ENCODE measurements at regions of chr2 and their contacts with region 1.

Region 1: GRCh38 chr2:70616168-70616694 is 62.6 kb upstream of the TGFA start:
- DNase-seq: no peak
- ATAC-seq: no peak
- H3K4me3 ChIP-seq: no peak overlapping the region
- H3K27ac ChIP-seq: no peak overlapping the region
- H3K4me1 ChIP-seq: no peaks in the 10 kb centered on the region
- CTCF ChIP-seq: no peak
- EP300 ChIP-seq: no peak
- POLR2A ChIP-seq: no peak
- RAD21 ChIP-seq: no peak

Region 2: DNA sequence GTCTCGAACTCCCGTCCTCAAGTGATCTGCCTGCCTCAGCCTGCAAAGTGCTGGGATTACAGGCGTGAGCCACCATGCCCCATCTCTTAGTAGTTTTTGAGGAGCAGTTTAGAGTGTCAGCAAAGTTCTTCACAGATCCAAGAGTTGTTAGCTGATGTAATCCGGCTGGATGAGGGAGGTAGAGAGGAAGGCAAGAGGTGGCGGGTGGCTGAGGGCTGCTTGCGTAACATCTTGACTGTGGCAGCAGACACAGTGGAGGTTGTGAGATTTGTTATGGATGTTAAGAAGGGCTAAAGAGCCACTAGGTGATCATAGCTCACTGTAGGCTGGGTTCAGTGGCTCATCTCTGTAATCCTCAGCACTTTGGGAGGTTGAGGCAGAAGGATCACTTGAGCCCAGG is 294.9 kb before region 1 on chr2:
- CTCF ChIA-PET with region 1: interaction called, 13 read pairs
- POLR2A ChIA-PET with region 1: no interaction called
- DNase-seq: no peak
- ATAC-seq: no peak
- H3K4me3 ChIP-seq: no peak overlapping the region
- H3K27ac ChIP-seq: no peak overlapping the region
- H3K4me1 ChIP-seq: no peaks in the 10 kb centered on the region
- CTCF ChIP-seq: no peak
- EP300 ChIP-seq: no peak
- POLR2A ChIP-seq: no peak
- RAD21 ChIP-seq: no peak

Region 3: GRCh38 chr2:70347831-70348230 is 268.4 kb before region 1 on chr2:
- CTCF ChIA-PET with region 1: interaction called, 202 read pairs
- POLR2A ChIA-PET with region 1: no interaction called
- DNase-seq: no peak
- ATAC-seq: no peak
- H3K4me3 ChIP-seq: no peak overlapping the region
- H3K27ac ChIP-seq: no peak overlapping the region
- H3K4me1 ChIP-seq: peaks cover 9% of the 10 kb centered on the region; the same call in 1 of the 3 replicates
- CTCF ChIP-seq: no peak
- EP300 ChIP-seq: no peak
- POLR2A ChIP-seq: no peak
- RAD21 ChIP-seq: no peak

Region 4: DNA sequence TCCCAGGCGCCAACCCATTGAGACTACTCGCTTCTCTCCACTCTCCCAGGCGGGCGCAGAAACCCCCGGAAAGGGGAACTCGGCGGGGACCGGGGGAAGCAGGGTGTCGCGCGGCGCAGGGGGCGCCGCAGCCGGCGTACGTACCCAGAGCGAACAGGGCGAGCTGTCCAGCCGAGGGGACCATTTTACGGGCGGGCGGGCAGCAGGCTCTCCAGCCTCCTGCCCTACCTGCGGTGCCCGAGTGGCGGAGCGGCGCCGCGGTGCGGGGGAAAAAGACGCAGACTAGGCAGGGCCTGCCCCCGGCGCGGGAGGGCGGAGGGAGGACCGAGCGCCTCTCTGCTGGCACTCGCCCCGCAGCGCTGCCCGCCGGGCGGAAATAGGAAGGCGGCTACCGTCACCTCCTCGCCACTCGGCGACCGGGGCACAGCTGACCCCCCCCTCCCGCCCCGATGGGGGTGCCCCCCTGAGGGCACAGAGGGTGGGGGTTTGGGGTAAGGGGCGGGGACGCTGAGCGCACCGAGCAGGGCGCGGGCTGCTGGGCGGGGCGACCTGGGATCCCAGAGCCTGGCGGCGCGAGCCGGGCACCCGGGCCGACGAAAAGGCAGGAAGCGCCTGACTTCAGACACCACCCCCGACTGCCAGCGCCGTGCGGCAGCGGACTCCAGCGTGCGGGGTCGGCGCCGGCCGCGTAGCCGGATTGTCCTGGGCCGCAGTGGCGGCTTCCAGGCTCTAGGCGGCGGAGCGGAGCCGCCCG is 62.5 kb before region 1 on chr2 and contains the start of gene TGFA:
- CTCF ChIA-PET with region 1: interaction called, 47 read pairs
- POLR2A ChIA-PET with region 1: no interaction called
- DNase-seq: peak; percentile 68 to 82
- ATAC-seq: peak; percentile 87 to 93
- H3K4me3 ChIP-seq: peak within 1 kb of the TSS; percentile 59
- H3K27ac ChIP-seq: peak within 1 kb of the TSS; percentile 75 to 86
- H3K4me1 ChIP-seq: peaks cover 12% of the 10 kb centered on the region; the same call in 2 of the 3 replicates
- CTCF ChIP-seq: peak; percentile 65
- EP300 ChIP-seq: peak in 1 of 2 experiments; percentile 9; a peak in 1 of 5 replicates
- POLR2A ChIP-seq: peak; percentile 51
- RAD21 ChIP-seq: peak; percentile 52 to 66
- polyA plus RNA-seq, gene TGFA: 3.5 and 3.6 TPM in 2 replicates

Region 5: GRCh38 chr2:70632389-70632788 is 16.2 kb after region 1 on chr2:
- CTCF ChIA-PET with region 1: interaction called, 70 read pairs
- POLR2A ChIA-PET with region 1: no interaction called
- DNase-seq: no peak
- ATAC-seq: no peak
- H3K4me3 ChIP-seq: no peak overlapping the region
- H3K27ac ChIP-seq: no peak overlapping the region
- H3K4me1 ChIP-seq: peaks cover 5% of the 10 kb centered on the region
- CTCF ChIP-seq: no peak
- EP300 ChIP-seq: no peak
- POLR2A ChIP-seq: no peak
- RAD21 ChIP-seq: no peak

Region 6: GRCh38 chr2:70930371-70931329 is 314.4 kb after region 1 on chr2:
- CTCF ChIA-PET with region 1: no interaction called
- POLR2A ChIA-PET with region 1: no interaction called
- DNase-seq: no peak
- ATAC-seq: no peak
- H3K4me3 ChIP-seq: no peak overlapping the region
- H3K27ac ChIP-seq: no peak overlapping the region
- H3K4me1 ChIP-seq: no peaks in the 10 kb centered on the region
- CTCF ChIP-seq: no peak
- EP300 ChIP-seq: no peak
- POLR2A ChIP-seq: no peak
- RAD21 ChIP-seq: no peak

Region 7: GRCh38 chr2:71102981-71103681 is 486.9 kb after region 1 on chr2:
- CTCF ChIA-PET with region 1: no interaction called
- POLR2A ChIA-PET with region 1: no interaction called
- DNase-seq: no peak
- ATAC-seq: no peak
- H3K4me3 ChIP-seq: no peak overlapping the region
- H3K27ac ChIP-seq: no peak overlapping the region
- H3K4me1 ChIP-seq: no peaks in the 10 kb centered on the region
- CTCF ChIP-seq: no peak
- EP300 ChIP-seq: no peak
- POLR2A ChIP-seq: no peak
- RAD21 ChIP-seq: no peak

Measured in A549 (cell line).